Cardiac septum (tissue), 1 donor: ENCODE measurements at regions of chr17 and their contacts with region 1.

Region 1: DNA sequence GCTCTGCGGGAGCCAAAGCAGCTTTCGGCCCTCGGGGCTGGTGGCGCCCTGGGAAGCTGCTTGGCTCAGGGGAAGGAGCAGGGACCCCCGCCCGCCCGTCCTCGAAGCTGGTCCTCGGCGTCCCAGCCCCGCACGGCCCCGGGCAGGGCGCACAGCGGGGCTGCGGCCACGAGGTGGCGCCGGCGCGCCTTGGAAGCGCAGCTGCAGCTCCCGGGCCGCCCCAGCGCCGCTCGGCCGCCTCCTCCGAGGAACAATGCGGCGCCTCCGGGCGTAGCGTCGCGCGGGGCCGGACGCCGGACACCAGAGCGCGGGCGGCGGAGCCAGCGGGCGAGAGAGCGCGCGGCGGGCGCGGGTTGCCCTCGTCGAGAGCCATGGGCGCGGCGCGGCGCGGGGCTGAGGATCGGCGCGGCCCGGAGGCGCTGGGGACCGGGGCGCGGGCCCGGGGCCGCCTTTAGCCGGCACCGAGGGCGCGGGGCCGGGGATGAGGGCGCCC is at the start of gene MGAT5B:
- DNase-seq: no peak
- total RNA-seq, gene MGAT5B: 0.13 TPM

Region 2: GRCh38 chr17:76753061-76753961 is 114.9 kb before region 1 on chr17:
- intact Hi-C with region 1: no loop called
- DNase-seq: no peak

Region 3: DNA sequence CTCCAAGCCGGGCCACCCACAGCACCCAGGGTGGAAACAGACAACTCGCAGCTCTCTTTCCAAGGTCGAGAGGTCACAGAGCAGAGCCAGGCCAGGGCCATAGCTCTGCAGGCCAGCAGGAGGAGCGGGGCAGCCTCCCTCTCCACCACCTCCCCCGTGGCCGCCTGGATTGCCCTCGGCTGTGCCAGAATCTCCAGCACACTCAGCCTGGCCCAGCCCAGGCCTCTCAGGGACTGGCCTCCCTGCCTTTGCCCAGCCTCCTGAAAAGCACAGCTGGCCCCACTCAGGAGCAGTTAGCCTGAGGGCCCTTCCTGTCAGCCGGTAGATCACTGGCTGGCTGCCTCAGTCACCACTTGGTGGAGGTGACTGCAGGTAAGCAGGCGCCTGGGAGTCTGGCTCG is 186.7 kb after region 1 on chr17:
- intact Hi-C with region 1: loop called (anchors 2 kb)
- DNase-seq: no peak

Region 4: DNA sequence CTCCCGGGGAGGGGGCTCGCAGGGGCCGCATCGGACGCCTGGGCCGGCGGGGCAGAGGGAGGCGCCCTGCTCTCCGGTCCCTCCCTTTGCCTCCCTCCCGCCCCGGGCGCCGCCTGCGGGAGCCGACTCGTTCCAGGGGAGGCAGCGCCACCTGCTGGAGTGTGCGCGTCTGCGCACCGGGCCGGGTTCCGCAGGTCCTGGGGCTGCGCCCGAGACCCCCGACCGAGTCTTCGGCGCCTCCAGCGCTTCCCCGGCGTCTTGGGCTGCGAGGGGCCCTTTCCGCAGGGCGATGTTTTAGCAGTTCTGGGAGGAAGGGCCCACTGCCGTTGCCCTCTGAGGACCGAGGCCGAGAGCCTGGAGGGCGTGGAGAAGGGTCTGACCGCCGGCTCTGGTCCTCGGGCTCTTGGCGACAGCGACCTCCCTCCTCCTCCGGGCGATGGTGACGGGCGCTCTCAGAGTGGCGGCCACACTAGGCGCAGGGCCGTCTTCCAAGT is 378.9 kb after region 1 on chr17:
- intact Hi-C with region 1: loop called (anchors 10 kb)
- DNase-seq: peak; percentile 92

Region 5: DNA sequence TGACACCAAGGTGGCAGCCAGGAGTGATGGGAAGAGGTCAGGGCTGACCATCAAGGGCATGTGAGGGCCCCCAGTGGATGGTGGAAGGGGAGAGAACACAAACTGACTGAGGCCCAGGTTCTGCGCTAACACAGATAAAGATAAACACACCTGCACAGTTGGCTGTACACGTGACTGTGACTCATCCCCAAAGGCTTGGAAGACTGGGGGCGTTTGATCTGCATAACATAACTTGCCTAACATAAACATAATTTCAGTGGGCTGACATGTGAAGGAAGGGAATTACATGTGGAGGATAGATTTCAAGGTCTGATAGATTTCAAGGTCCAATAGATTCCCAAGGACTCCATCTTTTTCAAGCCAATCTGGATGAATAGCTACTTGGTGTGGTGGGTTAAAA is 989.4 kb after region 1 on chr17:
- intact Hi-C with region 1: loop called (anchors 10 kb)
- DNase-seq: no peak